Posterior vena cava (tissue), 2 donors: ENCODE measurements at regions of chr4 and their contacts with region 1.

Region 1: DNA sequence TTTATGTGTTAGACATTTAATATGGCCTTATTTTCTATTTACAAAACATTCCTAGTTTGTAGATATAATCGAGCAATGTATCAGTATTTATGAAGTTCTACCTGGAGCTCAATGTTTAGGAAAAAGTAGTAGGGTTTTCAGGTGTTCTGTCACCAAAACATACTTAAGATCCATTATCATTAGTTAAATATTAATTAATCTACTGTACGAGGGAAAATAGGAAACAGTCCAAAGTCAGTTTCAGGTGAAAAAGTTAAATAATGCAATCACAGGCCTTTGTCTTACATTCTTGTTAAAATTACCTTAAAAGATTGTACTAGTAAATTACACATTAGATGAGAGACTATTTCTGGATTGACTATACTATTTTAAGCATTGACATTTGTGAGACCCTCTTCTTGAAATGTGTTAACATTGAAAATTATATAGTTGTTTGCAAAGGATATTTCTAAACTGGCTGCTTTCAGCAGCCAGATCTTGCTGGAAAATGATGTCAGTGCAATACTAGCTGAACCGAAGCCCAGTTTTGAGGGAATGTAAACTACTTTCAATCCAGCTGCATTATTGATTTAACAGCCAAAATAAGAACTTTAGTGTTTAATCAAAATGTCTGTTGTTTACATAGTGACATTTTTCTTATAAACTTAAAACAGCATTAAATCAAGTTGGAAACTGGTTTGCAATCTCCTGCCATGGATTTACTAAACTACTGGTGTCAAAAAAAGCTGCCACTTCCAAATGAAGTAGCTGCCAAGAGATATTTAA is 19.3 kb downstream of the GUCY1B1 start:
- DNase-seq: no peak

Region 2: GRCh38 chr4:155442267-155443105 is 335.7 kb before region 1 on chr4:
- intact Hi-C with region 1: loop called in 1 of 2 experiments (anchors 10 kb)
- DNase-seq: peak; percentile 95

Region 3: DNA sequence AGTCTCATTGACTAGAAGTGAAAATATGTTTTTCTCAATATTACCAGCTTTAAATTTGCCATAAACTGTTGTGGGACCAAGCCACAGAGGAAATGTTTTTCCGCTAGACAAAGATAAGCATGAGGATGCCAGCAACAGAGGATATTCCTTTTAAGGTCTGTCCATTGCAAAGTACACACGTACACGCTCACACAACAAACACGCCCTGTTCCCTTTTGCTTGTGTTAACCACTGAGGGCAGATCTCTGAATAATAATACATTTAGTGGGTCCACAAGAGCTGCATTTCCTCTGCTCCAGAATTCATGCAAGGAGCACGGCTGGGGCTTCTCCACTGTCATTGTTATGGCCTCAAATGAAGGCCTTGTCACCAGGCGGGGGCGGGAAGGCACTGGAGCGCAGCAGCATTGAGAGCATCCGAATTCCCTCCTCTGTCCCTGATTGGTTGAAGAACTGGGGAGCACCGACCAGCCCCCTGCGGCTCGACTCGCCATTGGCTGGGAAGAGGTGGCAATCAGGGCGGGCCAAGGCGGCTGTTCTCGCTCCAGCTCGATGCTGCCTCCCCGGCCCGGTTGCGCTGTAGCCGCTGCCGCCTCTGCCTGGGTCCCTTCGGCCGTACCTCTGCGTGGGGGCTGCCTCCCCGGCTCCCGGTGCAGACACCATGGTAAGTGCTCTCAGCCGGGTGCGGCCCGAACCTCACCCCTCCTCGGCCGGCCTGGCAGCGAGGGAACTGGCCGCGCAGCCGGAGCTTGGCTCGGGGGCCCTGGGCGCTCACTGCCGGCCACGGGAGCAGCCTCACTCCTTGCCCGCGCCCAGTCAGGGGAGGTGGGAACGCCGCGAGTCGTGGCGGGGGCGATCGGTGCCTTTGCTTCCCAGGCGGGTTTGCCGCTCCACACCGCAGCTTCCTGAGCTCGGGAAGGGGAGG is 19.4 kb before region 1 on chr4 and contains the start of gene GUCY1B1:
- intact Hi-C with region 1: no loop called
- DNase-seq: peak; percentile 98
- total RNA-seq, gene GUCY1B1: 21.1 to 26.8 TPM

Region 4: DNA sequence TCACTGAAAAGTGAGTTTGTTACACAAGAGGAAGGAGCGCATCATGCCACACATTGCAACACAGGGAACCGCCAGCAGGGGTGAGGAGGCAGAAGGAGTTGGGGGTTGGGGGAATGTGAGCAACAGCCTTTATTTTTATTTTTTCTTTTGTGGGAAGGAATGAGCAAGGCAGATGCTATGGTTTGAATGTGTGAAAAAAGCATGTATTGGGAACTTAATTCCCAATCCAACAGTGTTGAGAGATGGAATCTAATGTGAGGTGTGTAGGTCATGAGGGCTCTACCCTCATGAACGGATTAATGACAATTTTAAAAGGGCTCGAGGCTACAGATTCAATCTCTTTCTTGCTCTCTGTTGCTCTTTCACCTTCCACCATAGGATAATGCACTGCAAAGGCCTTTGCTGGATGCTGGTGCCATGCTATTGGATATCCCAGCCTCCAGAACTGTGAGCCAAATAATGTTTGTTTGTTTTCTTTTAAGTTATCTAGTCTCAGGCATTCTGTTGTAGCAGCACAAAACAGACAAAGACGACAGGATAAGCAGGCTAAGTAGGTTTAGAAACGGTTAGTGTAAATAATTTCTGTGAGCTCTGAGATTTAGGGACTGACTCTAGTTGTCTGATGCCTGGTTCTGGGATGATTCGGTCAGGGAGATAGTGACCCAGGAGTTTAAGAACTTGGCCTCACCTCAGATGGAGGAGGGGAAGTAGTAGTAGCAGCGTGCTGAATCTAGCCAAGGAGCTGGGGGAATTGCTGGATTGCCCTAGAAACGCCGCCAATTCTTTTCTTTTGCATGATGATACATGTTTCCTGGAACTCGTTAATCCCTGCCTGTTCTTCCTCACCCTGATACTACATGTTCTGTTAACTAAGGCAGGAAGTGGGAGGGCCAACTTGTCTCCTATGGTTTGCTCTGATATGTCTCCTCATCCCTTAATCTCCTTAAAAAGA is 332.1 kb after region 1 on chr4:
- intact Hi-C with region 1: no loop called
- DNase-seq: no peak